Activated T-helper 2 cell treated with anti-CD3 and anti-CD28 coated beads, Interferon-gamma antibody, Interleukin-2, Interleukin-4, amounts not matched to agents 10 μg/mL and 5 μg/mL and 100 μg/mL, durations not matched to agents 14 hours and 24 hours and 36 hours (primary cell): ENCODE measurements at regions of chr13 and their contacts with region 1.

Region 1: DNA sequence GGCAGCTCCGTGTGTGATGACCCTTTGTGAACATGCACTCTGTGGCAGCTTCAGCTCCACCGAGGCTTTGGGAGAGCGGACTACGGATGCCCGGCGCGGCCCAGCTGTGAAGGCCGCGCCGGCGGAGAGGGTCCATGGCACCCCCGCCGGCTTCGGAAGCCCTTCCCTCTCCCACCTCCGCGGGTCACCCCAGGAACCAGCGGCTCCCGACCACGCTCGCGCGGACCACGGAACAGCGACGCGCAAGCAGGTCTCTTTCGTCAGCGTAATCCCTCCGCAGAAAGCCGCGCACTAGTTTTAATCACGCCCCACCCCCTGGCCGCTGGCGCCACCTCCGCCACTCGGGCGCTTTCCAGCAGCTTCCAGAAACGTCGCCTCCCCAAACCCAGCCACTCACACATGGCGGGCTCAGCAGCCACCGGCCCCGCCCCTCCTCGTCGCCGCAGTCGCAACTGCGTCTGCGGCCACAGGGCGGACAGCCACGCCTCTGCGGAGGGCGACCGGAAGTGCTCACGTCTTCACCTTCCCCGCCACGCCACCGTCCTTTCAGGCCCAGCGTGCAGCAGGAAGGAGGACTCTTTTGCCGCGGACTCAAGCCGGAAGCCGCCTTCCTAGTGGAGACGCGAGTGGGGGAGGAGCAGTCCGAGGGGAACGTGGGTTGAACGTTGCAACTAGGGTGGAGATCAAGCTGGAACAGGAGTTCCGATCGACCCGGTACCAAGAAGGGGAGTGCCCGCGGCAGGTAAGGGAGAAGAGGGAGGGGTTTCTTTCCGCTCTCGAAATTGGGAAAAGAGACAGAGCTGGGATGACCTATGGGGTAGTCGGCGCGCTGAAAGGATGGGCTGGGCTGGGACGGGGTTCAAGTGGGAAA is at the start of gene USPL1:
- DNase-seq: peak; percentile 99
- H3K4me3 Mint-ChIP-seq: no peak within 1 kb of the TSS
- H3K27ac Mint-ChIP-seq: no peak within 1 kb of the TSS
- H3K4me1 Mint-ChIP-seq: peaks cover 26% of the 10 kb centered on the region
- H3K27me3 Mint-ChIP-seq: no peaks in the 10 kb centered on the region
- total RNA-seq, gene USPL1: 14.0 and 14.3 TPM in 2 replicates

Region 2: DNA sequence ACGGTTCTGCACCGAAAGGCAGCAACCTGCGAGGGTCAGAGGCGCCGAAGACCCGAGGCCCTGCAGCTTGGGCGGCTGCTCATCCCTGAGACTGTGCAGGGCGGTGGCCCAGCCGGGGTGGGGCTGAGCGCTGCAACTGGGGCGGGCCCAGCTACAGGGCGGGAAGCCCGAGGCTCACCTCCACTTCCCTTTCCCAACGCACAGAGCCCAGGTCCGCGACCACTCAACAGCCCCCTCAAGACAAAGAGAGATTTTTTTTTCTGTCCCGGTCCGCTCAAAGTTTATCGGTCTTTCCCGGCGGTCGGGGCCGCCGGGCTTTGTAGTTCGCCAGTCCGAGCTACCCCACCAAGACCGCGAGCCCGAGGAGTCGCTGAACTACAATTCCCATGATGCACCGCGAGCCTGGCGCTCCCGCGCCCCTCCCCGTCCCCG is 310.8 kb before region 1 on chr13:
- intact Hi-C with region 1: loop called (anchors 2 kb)
- DNase-seq: peak; percentile 88
- H3K4me3 Mint-ChIP-seq: peak overlapping the region; percentile 86
- H3K27ac Mint-ChIP-seq: peak overlapping the region; percentile 80
- H3K4me1 Mint-ChIP-seq: peaks cover 38% of the 10 kb centered on the region
- H3K27me3 Mint-ChIP-seq: no peaks in the 10 kb centered on the region

Region 3: GRCh38 chr13:30408319-30409101 is 209.0 kb before region 1 on chr13:
- intact Hi-C with region 1: loop called (anchors 5 kb)
- DNase-seq: peak; percentile 89
- H3K4me3 Mint-ChIP-seq: no peak overlapping the region
- H3K27ac Mint-ChIP-seq: peak overlapping the region; percentile 40
- H3K4me1 Mint-ChIP-seq: peaks cover 21% of the 10 kb centered on the region
- H3K27me3 Mint-ChIP-seq: no peaks in the 10 kb centered on the region

Region 4: GRCh38 chr13:30654430-30654829 is 36.9 kb after region 1 on chr13:
- intact Hi-C with region 1: loop called (anchors 1 kb)
- DNase-seq: peak; percentile 56
- H3K4me3 Mint-ChIP-seq: peak overlapping the region; percentile 59
- H3K27ac Mint-ChIP-seq: peak overlapping the region; percentile 76
- H3K4me1 Mint-ChIP-seq: peaks cover 36% of the 10 kb centered on the region
- H3K27me3 Mint-ChIP-seq: no peaks in the 10 kb centered on the region

Region 5: DNA sequence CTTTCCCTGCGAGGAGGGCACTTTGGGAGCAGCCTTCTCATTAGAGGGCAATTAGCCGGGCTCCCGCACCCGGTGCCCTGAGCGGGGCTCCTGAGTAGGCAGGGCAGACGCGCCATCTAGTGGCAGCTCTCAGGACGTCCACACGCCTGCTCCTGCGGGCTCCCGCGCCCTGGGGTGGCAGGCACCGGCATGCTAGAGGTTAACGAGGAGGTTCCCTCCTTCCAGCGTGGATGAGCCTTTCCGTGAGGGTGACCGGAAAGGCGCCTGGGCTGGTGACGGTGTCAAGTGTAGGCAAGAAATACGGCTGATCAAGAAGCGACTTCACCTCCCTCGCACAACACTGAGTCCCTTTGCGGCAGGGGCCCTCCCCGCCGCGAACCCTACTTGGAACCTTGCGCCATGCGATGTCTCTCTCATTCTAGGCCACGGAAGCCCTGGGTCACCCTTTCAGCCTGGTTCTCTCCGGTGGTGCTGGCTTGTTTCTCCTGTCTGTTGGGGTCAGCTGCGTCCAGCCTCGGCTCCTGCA is 185.5 kb after region 1 on chr13:
- intact Hi-C with region 1: loop called (anchors 2 kb)
- DNase-seq: peak; percentile 76
- H3K4me3 Mint-ChIP-seq: peak overlapping the region; percentile 18
- H3K27ac Mint-ChIP-seq: no peak overlapping the region
- H3K4me1 Mint-ChIP-seq: peaks cover 10% of the 10 kb centered on the region
- H3K27me3 Mint-ChIP-seq: no peaks in the 10 kb centered on the region

Region 6: GRCh38 chr13:31161828-31162590 is 544.5 kb after region 1 on chr13 and contains the start of gene HSPH1:
- intact Hi-C with region 1: loop called (anchors 1 kb)
- DNase-seq: peak; percentile 98
- H3K4me3 Mint-ChIP-seq: peak within 1 kb of the TSS; percentile 95
- H3K27ac Mint-ChIP-seq: peak within 1 kb of the TSS; percentile 97
- H3K4me1 Mint-ChIP-seq: peaks cover 41% of the 10 kb centered on the region
- H3K27me3 Mint-ChIP-seq: no peaks in the 10 kb centered on the region
- total RNA-seq, gene HSPH1: 269 and 274 TPM in 2 replicates